Activated CD4-positive, alpha-beta T cell treated with anti-CD3 and anti-CD28 coated beads, Interleukin-2, amount 10 ng/mL, durations not matched to agents 24 days and 14 days (primary cell): ENCODE measurements at regions of chr20 and their contacts with region 1.

Region 1: DNA sequence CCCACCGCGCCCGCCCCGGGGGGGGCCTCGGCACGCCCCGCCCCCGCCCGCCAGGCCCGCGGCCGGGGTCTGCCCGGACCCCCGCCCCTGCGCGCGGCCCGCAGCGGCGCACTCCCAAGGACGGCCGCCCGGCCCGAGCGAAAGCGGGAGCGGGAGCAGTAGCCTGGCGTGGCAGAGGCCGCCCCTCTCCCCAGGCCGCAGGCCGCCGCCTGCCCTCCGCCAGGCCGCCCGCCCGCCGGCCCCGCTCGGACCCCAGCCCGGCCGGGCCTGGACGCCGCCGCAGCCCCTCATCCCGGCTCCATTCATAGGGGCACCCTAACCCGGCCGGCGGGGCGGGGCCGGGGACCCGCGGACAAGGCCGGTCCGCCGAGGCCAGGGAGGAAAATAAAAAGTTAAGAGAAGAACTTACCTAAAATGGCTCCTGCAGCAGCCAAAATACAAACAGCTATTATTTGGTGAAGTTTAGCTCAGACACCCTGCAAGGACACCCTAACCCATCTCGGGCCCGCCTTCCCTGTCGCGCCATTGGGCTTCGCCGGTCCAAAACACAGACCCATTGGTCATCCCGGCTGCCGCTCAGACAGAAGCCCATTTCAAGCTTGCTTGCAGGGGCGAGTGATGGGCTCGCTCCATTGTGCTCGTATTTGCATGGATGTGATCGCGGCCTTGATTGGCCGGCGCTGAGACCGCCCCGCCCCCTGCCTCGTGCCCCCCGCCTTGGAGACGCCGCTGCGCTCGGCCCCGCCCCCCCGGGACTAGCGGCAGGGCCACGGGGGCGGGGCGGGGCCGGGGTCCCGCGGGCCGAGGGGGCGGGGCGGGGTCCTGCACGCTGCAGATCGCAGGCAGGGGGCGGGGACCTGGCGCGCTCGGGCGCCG is at the start of gene CHD6:
- DNase-seq: peak; percentile 100
- H3K4me3 Mint-ChIP-seq: peak within 1 kb of the TSS; percentile 89
- H3K27ac Mint-ChIP-seq: peak within 1 kb of the TSS; percentile 86
- H3K4me1 Mint-ChIP-seq: peaks cover 31% of the 10 kb centered on the region
- H3K27me3 Mint-ChIP-seq: peaks cover 26% of the 10 kb centered on the region
- total RNA-seq, gene CHD6: 31.8 and 34.6 TPM in 2 replicates

Region 2: GRCh38 chr20:41428285-41428684 is 189.9 kb before region 1 on chr20:
- intact Hi-C with region 1: loop called (anchors 5 kb)
- DNase-seq: peak; percentile 85
- H3K4me3 Mint-ChIP-seq: peak overlapping the region; percentile 64
- H3K27ac Mint-ChIP-seq: peak overlapping the region; percentile 91
- H3K4me1 Mint-ChIP-seq: peaks cover 46% of the 10 kb centered on the region
- H3K27me3 Mint-ChIP-seq: no peaks in the 10 kb centered on the region

Region 3: GRCh38 chr20:41509316-41510200 is 108.6 kb before region 1 on chr20:
- intact Hi-C with region 1: loop called (anchors 10 kb)
- DNase-seq: no peak
- H3K4me3 Mint-ChIP-seq: no peak overlapping the region
- H3K27ac Mint-ChIP-seq: peak overlapping the region; percentile 19
- H3K4me1 Mint-ChIP-seq: peaks cover 22% of the 10 kb centered on the region
- H3K27me3 Mint-ChIP-seq: no peaks in the 10 kb centered on the region

Region 4: GRCh38 chr20:41592520-41593216 is 25.5 kb before region 1 on chr20:
- intact Hi-C with region 1: no loop called
- DNase-seq: no peak
- H3K4me3 Mint-ChIP-seq: no peak overlapping the region
- H3K27ac Mint-ChIP-seq: no peak overlapping the region
- H3K4me1 Mint-ChIP-seq: no peaks in the 10 kb centered on the region
- H3K27me3 Mint-ChIP-seq: no peaks in the 10 kb centered on the region